Gastrocnemius medialis (tissue), 4 donors: ENCODE measurements at regions of chr10 and their contacts with region 1.

Region 1: GRCh38 chr10:86399879-86400704 is 33.5 kb upstream of the GRID1 start:
- DNase-seq: peak; percentile 77 to 83
- ATAC-seq: peak; percentile 89 to 94
- H3K4me3 ChIP-seq: peak overlapping the region; percentile 56 to 92 (median 67)
- H3K27ac ChIP-seq: peak overlapping the region in 3 of 4 donors; percentile 48 to 76 (median 52)
- H3K4me1 ChIP-seq: peaks cover 11 to 29% of the 10 kb centered on the region in 2 donors
- H3K27me3 ChIP-seq: peaks cover 5 to 13% (median 13%) of the 10 kb centered on the region in 3 donors
- CTCF ChIP-seq: peak; percentile 87 to 96 (median 90)
- POLR2A ChIP-seq: no peak

Region 2: DNA sequence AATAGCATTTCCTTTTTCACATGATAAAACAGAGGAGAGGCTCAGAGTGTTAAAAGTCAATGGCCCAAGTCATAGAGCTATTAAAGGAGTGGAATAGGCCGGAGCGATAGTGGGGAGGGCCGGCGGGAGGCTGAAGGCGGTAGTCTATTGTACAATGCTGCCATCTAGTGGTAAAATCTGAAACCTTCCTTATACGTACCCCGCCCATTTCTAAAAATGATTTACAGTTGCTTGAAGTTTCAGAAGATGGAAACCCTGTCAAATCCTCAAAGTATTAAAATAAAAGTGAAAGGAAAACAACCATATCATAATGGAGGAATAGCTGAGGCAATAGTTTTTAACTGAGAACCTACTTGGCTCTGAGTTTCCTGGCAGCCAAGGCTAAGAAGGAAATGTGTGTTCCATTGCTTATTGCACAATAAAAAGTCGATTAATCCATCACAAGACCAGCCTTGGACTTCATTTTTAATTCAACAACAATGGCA is 1862.6 kb before region 1 on chr10:
- in situ Hi-C with region 1: loop called in 1 of 4 experiments (anchors 25 kb)
- intact Hi-C with region 1: no loop called
- DNase-seq: peak in 1 of 2 donors; percentile 32
- ATAC-seq: peak; percentile 72 to 89
- H3K4me3 ChIP-seq: no peak overlapping the region
- H3K27ac ChIP-seq: no peak overlapping the region
- H3K4me1 ChIP-seq: peaks cover 0 to 4% of the 10 kb centered on the region in 2 donors
- H3K27me3 ChIP-seq: peaks cover 18 to 22% (median 22%) of the 10 kb centered on the region in 3 donors
- CTCF ChIP-seq: peak; percentile 85 to 93 (median 89)
- POLR2A ChIP-seq: no peak

Region 3: GRCh38 chr10:85995791-85996190 is 404.3 kb before region 1 on chr10:
- in situ Hi-C with region 1: loop called in 1 of 4 experiments (anchors 25 kb)
- intact Hi-C with region 1: no loop called
- DNase-seq: no peak
- ATAC-seq: peak in 1 of 2 donors; percentile 54
- H3K4me3 ChIP-seq: no peak overlapping the region
- H3K27ac ChIP-seq: no peak overlapping the region
- H3K4me1 ChIP-seq: no peaks in the 10 kb centered on the region
- H3K27me3 ChIP-seq: no peaks in the 10 kb centered on the region
- CTCF ChIP-seq: peak in 3 of 5 experiments; percentile 26 to 50 (median 50)
- POLR2A ChIP-seq: no peak

Region 4: GRCh38 chr10:86349474-86349873 is 50.6 kb before region 1 on chr10:
- in situ Hi-C with region 1: no loop called
- intact Hi-C with region 1: no loop called
- DNase-seq: no peak
- ATAC-seq: no peak
- H3K4me3 ChIP-seq: no peak overlapping the region
- H3K27ac ChIP-seq: no peak overlapping the region
- H3K4me1 ChIP-seq: no peaks in the 10 kb centered on the region
- H3K27me3 ChIP-seq: peaks cover 0 to 3% (median 0%) of the 10 kb centered on the region in 3 donors
- CTCF ChIP-seq: no peak
- POLR2A ChIP-seq: no peak

Region 5: GRCh38 chr10:86439544-86439943 is 39.5 kb after region 1 on chr10:
- in situ Hi-C with region 1: no loop called
- intact Hi-C with region 1: loop called (anchors 2 kb)
- DNase-seq: peak; percentile 78 to 96
- ATAC-seq: peak; percentile 98 to 99
- H3K4me3 ChIP-seq: no peak overlapping the region
- H3K27ac ChIP-seq: peak overlapping the region; percentile 55 to 69 (median 62)
- H3K4me1 ChIP-seq: peaks cover 12 to 17% of the 10 kb centered on the region in 2 donors
- H3K27me3 ChIP-seq: no peaks in the 10 kb centered on the region
- CTCF ChIP-seq: peak in 3 of 5 experiments; percentile 21 to 24 (median 22)
- POLR2A ChIP-seq: no peak

Region 6: GRCh38 chr10:86521678-86522509 is 121.8 kb after region 1 on chr10 and contains the start of gene WAPL:
- in situ Hi-C with region 1: no loop called
- intact Hi-C with region 1: loop called (anchors 2 kb)
- DNase-seq: peak; percentile 94 to 95
- ATAC-seq: peak; percentile 90 to 92
- H3K4me3 ChIP-seq: peak within 1 kb of the TSS; percentile 78 to 96 (median 87)
- H3K27ac ChIP-seq: peak within 1 kb of the TSS; percentile 94 to 98 (median 94)
- H3K4me1 ChIP-seq: peaks cover 55 to 58% of the 10 kb centered on the region in 2 donors
- H3K27me3 ChIP-seq: no peaks in the 10 kb centered on the region
- CTCF ChIP-seq: no peak
- POLR2A ChIP-seq: peak; percentile 93 to 96
- total RNA-seq, gene WAPL: 36.9 to 43.4 (median 39.6) TPM

Region 7: GRCh38 chr10:86585037-86585725 is 185.1 kb after region 1 on chr10:
- in situ Hi-C with region 1: loop called (anchors 5 kb)
- intact Hi-C with region 1: loop called (anchors 1 kb)
- DNase-seq: peak; percentile 37 to 65
- ATAC-seq: peak; percentile 87 to 95
- H3K4me3 ChIP-seq: peak overlapping the region in 1 of 4 donors; percentile 21
- H3K27ac ChIP-seq: peak overlapping the region; percentile 31 to 65 (median 51)
- H3K4me1 ChIP-seq: peaks cover 5 to 7% of the 10 kb centered on the region in 2 donors
- H3K27me3 ChIP-seq: no peaks in the 10 kb centered on the region
- CTCF ChIP-seq: peak; percentile 92 to 98 (median 96)
- POLR2A ChIP-seq: no peak